ENCODE measurements at regions of chr2 and their contacts with region 1.

Region 1: GRCh38 chr2:12456293-12457151 is 260.2 kb upstream of the TRIB2 start:
- DNase-seq: peak; percentile 94 to 97 (median 95)
- H3K4me3 ChIP-seq: peak overlapping the region in 2 of 3 experiments; percentile 36 to 60
- H3K4me3 Mint-ChIP-seq: peak overlapping the region in 1 of 2 donors; percentile 54
- H3K27ac ChIP-seq: peak overlapping the region; percentile 34 to 85
- H3K27ac Mint-ChIP-seq: peak overlapping the region; percentile 83 to 96 (median 92)
- H3K4me1 ChIP-seq: peaks cover 54 to 65% of the 10 kb centered on the region in 2 donors
- H3K4me1 Mint-ChIP-seq: peaks cover 51% of the 10 kb centered on the region
- H3K27me3 ChIP-seq: no peaks in the 10 kb centered on the region
- H3K27me3 Mint-ChIP-seq: peaks cover 0 to 3% (median 0%) of the 10 kb centered on the region in 3 donors
- CTCF ChIP-seq: no peak

Region 2: DNA sequence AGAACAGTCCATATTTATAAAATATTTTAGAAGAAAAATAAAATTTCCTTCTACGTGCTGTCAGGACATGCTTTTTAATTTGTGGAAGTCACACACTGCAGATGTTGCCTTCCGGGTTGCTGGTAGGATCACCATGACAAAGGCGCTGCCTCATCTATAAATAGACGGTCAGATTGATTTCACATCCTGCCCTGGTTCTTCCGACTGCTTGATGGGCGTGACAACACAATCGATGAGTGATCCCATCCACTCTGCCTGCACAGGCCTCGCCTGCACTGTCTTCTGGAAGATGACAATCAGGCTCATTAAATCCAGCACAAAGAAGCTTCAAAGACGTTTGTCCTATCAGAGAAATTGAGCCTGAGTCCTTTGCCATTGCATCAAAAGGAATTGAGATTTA is 58.7 kb before region 1 on chr2:
- intact Hi-C with region 1: no loop called
- DNase-seq: peak; percentile 6 to 16 (median 16)
- H3K4me3 ChIP-seq: peak overlapping the region in 1 of 3 experiments; percentile 11
- H3K4me3 Mint-ChIP-seq: peak overlapping the region in 1 of 2 donors; percentile 85
- H3K27ac ChIP-seq: no peak overlapping the region
- H3K27ac Mint-ChIP-seq: peak overlapping the region in 1 of 7 donors; percentile 7
- H3K4me1 ChIP-seq: peaks cover 5 to 10% of the 10 kb centered on the region in 2 donors
- H3K4me1 Mint-ChIP-seq: peaks cover 8% of the 10 kb centered on the region
- H3K27me3 ChIP-seq: no peaks in the 10 kb centered on the region
- H3K27me3 Mint-ChIP-seq: peaks cover 0 to 8% (median 6%) of the 10 kb centered on the region in 3 donors
- CTCF ChIP-seq: no peak

Region 3: GRCh38 chr2:12501469-12502158 is 45.1 kb after region 1 on chr2:
- intact Hi-C with region 1: loop called in 1 of 2 experiments (anchors 5 kb)
- DNase-seq: peak in 2 of 3 donors; percentile 31 to 73
- H3K4me3 ChIP-seq: peak overlapping the region in 1 of 3 experiments; percentile 33
- H3K4me3 Mint-ChIP-seq: peak overlapping the region in 1 of 2 donors; percentile 46
- H3K27ac ChIP-seq: peak overlapping the region in 1 of 2 donors; percentile 51
- H3K27ac Mint-ChIP-seq: peak overlapping the region in 6 of 7 donors; percentile 5 to 81 (median 66)
- H3K4me1 ChIP-seq: peaks cover 35 to 64% of the 10 kb centered on the region in 2 donors
- H3K4me1 Mint-ChIP-seq: peaks cover 60% of the 10 kb centered on the region
- H3K27me3 ChIP-seq: no peaks in the 10 kb centered on the region
- H3K27me3 Mint-ChIP-seq: peaks cover 0 to 2% (median 2%) of the 10 kb centered on the region in 3 donors
- CTCF ChIP-seq: no peak

Region 4: DNA sequence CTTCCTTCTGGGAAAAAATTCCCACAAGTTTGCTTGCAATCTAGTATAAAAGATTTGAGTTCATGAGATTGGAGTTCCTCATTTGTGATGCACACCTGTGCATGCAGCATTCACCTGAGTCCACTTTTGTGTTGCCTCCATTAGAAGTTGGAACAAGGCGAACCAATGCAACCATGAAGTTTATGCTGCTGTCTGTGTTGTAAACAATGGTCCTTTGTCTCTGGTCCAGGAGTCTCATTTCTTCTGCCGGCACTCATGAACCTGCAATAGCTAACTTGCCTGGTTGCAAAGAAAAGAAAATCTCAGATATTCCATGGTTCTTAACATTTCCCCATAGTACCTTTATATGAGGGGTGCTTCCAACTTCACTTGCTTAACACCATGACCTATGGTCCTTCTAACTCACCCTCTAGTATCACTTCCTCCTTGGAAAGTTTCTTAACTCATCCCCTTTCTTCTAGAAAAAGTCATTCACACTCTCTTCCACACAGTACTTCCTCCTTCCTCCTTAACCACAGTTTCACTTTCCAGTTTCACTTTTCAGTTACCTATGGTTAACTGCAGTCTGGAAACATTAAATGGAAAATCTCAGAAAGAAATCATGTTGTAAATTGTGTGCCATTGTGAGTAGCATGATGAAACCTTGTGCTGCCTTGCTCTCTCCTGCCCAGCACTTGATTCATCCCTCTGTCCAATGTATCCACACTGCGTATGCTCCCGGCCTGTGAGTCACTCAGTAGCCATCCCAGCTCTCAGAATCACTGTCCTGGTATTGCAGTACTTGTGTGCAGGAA is 131.4 kb after region 1 on chr2:
- intact Hi-C with region 1: loop called in 1 of 2 experiments (anchors 10 kb)
- DNase-seq: peak; percentile 85 to 97 (median 96)
- H3K4me3 ChIP-seq: peak overlapping the region in 2 of 3 experiments; percentile 34 to 61
- H3K4me3 Mint-ChIP-seq: peak overlapping the region; percentile 72 to 80
- H3K27ac ChIP-seq: peak overlapping the region; percentile 56 to 76
- H3K27ac Mint-ChIP-seq: peak overlapping the region; percentile 89 to 98 (median 96)
- H3K4me1 ChIP-seq: peaks cover 35 to 40% of the 10 kb centered on the region in 2 donors
- H3K4me1 Mint-ChIP-seq: peaks cover 43% of the 10 kb centered on the region
- H3K27me3 ChIP-seq: no peaks in the 10 kb centered on the region
- H3K27me3 Mint-ChIP-seq: peaks cover 0 to 2% (median 1%) of the 10 kb centered on the region in 3 donors
- CTCF ChIP-seq: no peak

Measured in CD14-positive monocyte (primary cell).